ENCODE measurements at regions of chr9 and their contacts with region 1.

Region 1: GRCh38 chr9:114385412-114386181 is 2.2 kb downstream of the AKNA start:
- DNase-seq: peak; percentile 70
- H3K4me3 ChIP-seq: peak overlapping the region; percentile 74
- H3K27ac ChIP-seq: peak overlapping the region; percentile 89
- H3K27me3 ChIP-seq: no peaks in the 10 kb centered on the region
- CTCF ChIP-seq: no peak

Region 2: DNA sequence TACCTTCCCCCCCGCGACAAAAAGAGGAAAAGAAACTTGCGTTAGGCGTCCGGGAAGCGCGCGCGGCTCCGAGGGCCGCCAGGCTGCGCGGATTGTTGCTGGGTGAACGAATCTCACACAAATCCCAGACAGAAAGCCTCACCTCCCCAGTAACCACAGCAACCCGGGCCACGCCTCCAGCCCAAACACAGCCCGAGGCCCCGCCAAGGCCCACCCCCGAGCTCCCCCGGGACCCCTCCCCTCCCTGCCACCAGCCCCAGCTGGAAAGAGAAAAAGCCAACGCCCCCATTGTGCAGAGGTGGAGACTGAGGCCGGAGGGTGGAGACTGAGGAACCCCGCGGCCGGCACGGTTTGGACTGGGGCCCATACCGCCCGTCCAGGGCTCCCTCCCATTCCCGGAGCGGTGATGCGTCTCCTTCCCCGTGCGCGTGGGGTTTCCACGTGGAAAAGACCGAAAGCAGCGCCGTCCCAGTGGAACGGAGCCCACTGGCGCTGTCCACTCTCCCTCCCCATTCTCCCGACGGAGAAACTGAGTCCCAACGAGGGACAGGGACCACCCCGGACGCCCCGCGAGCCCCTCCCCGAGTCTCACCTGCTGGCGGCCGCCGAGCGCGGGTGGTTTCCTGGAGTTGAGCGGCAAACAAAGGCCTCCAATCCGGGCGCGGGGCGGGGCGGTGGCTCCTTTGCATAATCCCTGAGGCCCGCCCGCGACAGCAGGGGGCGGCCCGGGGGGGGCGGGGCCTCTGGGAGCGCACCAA is 12.4 kb after region 1 on chr9:
- CTCF ChIA-PET with region 1: no interaction called
- POLR2A ChIA-PET with region 1: interaction called, 12 read pairs
- DNase-seq: peak; percentile 71
- H3K4me3 ChIP-seq: peak overlapping the region; percentile 87
- H3K27ac ChIP-seq: peak overlapping the region; percentile 73
- H3K27me3 ChIP-seq: no peaks in the 10 kb centered on the region
- CTCF ChIP-seq: no peak

Region 3: DNA sequence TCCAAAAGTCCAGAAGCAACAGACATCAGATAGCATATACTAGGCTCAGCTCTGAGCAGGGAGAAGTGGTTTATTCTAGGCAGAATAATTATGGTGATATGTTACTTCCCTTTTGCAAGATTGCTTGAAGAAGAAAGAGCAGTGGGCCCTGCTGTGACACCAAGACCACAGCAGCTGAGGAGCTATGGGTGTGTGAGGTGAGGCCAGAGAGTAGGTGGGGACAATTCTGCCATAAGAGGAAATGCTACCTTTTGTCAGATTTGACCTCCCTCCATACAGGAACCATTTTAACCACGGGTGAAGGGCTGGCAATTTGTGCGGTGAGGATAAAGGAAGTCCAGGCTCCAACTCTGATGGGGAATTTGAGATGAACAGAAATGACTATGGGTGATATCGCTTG is 369.0 kb after region 1 on chr9:
- CTCF ChIA-PET with region 1: no interaction called
- POLR2A ChIA-PET with region 1: no interaction called
- DNase-seq: no peak
- H3K4me3 ChIP-seq: no peak overlapping the region
- H3K27ac ChIP-seq: no peak overlapping the region
- H3K27me3 ChIP-seq: peaks cover 9% of the 10 kb centered on the region
- CTCF ChIP-seq: no peak